ENCODE measurements at regions of chr3 and their contacts with region 1.

Region 1: GRCh38 chr3:54427941-54428871 is 305.9 kb downstream of the CACNA2D3 start:
- DNase-seq: peak; percentile 26
- H3K4me3 ChIP-seq: no peak overlapping the region
- H3K27ac ChIP-seq: no peak overlapping the region
- H3K4me1 ChIP-seq: no peaks in the 10 kb centered on the region
- H3K27me3 ChIP-seq: no peaks in the 10 kb centered on the region
- CTCF ChIP-seq: peak; percentile 86 to 90

Region 2: GRCh38 chr3:54146506-54147239 is 281.5 kb before region 1 on chr3:
- CTCF ChIA-PET with region 1: no interaction called
- dilution Hi-C with region 1: no loop called
- in situ Hi-C with region 1: no loop called
- intact Hi-C with region 1: loop called (anchors 5 kb)
- DNase-seq: peak; percentile 23
- H3K4me3 ChIP-seq: no peak overlapping the region
- H3K27ac ChIP-seq: no peak overlapping the region
- H3K4me1 ChIP-seq: no peaks in the 10 kb centered on the region
- H3K27me3 ChIP-seq: no peaks in the 10 kb centered on the region
- CTCF ChIP-seq: peak; percentile 32 to 72

Region 3: DNA sequence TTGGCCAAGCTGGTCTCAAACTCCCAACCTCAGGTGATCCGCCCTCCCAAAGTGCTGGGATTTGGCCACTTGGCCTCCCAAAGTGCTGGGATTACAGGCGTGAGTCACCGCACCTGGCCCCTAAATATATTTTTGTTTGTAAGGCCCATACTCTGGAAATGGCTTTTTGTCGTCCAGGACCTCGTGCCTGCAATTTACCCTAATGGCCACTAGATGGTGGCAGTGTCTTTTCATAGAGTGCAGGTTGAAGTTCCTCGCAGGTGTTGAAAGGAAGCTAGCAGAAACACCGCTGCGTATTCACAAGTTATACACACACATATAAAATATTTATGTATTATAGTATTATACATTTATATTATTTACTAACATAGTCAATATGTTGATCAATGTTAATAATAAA is 402.5 kb after region 1 on chr3:
- CTCF ChIA-PET with region 1: no interaction called
- dilution Hi-C with region 1: no loop called
- in situ Hi-C with region 1: loop called in 1 of 2 experiments (anchors 25 kb)
- intact Hi-C with region 1: loop called (anchors 5 kb)
- DNase-seq: no peak
- H3K4me3 ChIP-seq: no peak overlapping the region
- H3K27ac ChIP-seq: no peak overlapping the region
- H3K4me1 ChIP-seq: peaks cover 10% of the 10 kb centered on the region
- H3K27me3 ChIP-seq: no peaks in the 10 kb centered on the region
- CTCF ChIP-seq: peak; percentile 60 to 81

Region 4: DNA sequence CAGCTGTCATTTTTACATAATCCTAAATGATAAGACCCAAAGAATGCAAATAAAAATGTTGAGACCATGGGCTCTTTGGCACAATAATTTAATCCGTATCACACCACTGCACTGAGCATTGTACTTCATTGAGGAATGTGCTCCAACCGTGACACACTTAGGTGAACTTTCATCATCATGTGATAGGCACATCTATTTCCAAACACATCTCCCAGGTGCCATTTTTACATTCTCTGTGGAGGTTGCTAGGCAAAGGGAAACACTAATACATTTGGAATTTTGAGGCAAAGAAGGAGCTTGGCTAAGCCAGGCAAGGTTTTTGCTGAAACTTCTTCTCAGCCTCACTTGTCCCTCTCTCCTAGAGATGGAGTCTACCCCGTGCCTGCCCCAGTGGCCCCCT is 431.0 kb after region 1 on chr3:
- CTCF ChIA-PET with region 1: no interaction called
- dilution Hi-C with region 1: no loop called
- in situ Hi-C with region 1: no loop called
- intact Hi-C with region 1: loop called (anchors 1 kb)
- DNase-seq: peak; percentile 81
- H3K4me3 ChIP-seq: no peak overlapping the region
- H3K27ac ChIP-seq: no peak overlapping the region
- H3K4me1 ChIP-seq: peaks cover 32% of the 10 kb centered on the region
- H3K27me3 ChIP-seq: no peaks in the 10 kb centered on the region
- CTCF ChIP-seq: no peak

Region 5: DNA sequence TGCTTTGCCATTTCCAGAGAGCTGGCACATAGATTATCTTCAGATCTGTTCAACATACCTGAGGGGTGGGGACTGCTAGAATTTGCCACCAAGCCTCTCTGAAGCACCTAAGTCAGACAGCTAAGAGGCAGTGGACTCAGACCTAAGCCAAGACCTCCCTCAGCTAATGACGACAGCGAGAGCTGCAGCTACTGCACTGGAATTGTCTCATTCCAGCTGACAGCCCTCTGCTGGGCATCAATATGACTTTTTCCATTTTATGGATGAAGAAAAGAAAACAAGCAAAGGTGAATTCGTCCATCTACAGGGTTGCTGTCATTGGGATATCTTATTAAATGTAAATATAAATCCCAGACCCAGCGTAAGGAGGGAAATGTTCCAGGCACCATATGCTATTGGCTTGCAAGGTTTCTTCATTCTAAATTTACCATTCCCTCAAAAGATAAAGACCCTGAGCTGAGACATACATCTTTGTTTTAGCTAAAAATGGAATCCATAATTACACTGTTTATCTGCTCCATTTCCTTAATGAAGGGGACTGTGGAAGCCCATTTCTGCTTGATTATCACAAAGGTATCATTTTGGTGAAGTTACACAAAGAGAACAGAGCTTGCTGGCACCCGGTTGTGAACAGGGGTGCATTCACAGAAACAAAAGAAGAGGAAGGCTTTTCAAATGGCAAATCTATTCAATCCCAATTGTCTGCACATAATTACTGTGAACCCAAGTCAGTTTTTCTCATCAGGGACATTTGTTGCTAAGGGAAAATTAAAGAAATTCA is 585.1 kb after region 1 on chr3:
- CTCF ChIA-PET with region 1: no interaction called
- dilution Hi-C with region 1: no loop called
- in situ Hi-C with region 1: no loop called
- intact Hi-C with region 1: loop called (anchors 5 kb)
- DNase-seq: peak; percentile 3
- H3K4me3 ChIP-seq: no peak overlapping the region
- H3K27ac ChIP-seq: no peak overlapping the region
- H3K4me1 ChIP-seq: no peaks in the 10 kb centered on the region
- H3K27me3 ChIP-seq: no peaks in the 10 kb centered on the region
- CTCF ChIP-seq: no peak

Region 6: DNA sequence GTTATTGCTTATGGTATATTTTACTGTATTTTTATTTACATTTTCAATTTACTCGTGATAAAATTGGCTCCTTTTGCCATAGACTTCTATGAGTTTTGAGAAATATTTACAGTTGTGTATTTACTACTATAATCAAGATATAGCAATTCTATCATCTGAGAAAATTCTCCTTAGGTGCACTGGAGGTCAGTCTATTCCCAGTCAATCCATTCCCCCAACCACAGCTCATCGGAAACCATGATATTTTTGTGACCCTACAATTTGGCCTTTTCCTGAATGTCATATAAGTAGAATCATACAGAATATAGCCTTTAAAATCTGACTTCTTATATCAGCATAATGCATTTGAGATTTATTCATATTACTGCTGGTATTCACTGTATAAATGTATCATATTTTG is 614.4 kb after region 1 on chr3:
- CTCF ChIA-PET with region 1: no interaction called
- dilution Hi-C with region 1: no loop called
- in situ Hi-C with region 1: no loop called
- intact Hi-C with region 1: no loop called
- DNase-seq: no peak
- H3K4me3 ChIP-seq: no peak overlapping the region
- H3K27ac ChIP-seq: no peak overlapping the region
- H3K4me1 ChIP-seq: no peaks in the 10 kb centered on the region
- H3K27me3 ChIP-seq: no peaks in the 10 kb centered on the region
- CTCF ChIP-seq: no peak

Region 7: DNA sequence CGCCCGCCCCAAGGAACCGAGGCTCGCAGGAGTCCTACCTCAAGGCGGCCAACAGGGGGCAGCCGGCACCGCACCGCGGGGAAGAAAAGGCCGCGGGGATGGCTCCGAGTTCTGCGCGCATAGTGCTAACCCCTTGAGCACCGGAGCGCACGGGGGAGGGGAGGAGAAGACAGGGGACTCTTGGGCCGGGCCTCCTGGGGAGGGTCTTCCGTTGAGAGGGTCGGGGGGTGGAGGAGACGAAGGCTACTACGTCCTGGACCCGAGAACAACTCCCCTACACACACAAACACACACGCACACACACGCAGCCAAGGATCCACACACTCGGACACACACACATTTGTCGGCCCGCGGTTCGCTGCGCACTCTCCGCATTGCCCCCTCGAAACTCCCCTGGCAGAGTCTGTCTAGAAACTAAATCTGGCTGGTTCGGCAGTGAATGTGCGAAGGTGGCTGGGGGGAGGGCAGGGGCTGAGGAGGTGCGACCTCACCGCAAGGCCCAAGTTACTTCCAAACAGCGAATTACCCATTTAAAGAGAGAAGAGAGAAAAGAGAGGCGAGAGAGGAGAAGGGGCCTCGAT is 1057.1 kb after region 1 on chr3:
- CTCF ChIA-PET with region 1: no interaction called
- dilution Hi-C with region 1: no loop called
- in situ Hi-C with region 1: no loop called
- intact Hi-C with region 1: loop called (anchors 5 kb)
- DNase-seq: peak; percentile 62
- H3K4me3 ChIP-seq: peak overlapping the region; percentile 55 to 86 (median 80)
- H3K27ac ChIP-seq: peak overlapping the region; percentile 23
- H3K4me1 ChIP-seq: peaks cover 38% of the 10 kb centered on the region
- H3K27me3 ChIP-seq: no peaks in the 10 kb centered on the region
- CTCF ChIP-seq: peak; percentile 48 to 73